Activated CD8-positive, alpha-beta T cell treated with anti-CD3 and anti-CD28 coated beads for 36 hours (primary cell): ENCODE measurements at regions of chr10 and their contacts with region 1.

Region 1: DNA sequence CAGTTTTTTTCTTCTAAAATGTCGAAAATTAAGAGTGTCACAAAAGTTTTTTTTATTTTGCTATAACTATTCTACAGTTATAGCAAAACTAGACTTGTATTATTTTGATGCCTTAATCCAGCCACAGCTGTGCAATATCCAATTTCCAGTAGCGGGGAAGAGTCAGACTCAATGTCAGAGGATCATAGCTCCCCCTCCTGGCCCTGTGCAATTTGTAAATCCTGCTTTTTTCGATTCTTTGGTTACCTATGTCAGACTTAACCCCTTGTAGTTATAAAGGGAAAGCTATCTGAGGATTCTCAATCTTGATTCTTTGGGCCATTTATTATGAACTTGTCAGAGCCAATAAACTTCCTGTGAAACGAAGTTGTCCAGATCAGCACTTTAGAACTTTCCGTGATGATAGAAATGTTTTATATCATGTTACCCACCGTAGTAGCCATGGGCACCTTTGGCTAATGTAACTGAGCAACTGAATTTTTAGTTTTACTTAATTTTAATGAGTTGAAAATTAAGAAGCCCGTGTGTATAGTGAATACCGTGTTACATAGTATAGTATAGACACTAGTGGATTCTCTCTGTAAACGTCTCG is 87.7 kb upstream of the PRKCQ start:
- DNase-seq: peak; percentile 74
- ATAC-seq: peak; percentile 38
- H3K4me3 Mint-ChIP-seq: no peak overlapping the region
- H3K27ac Mint-ChIP-seq: no peak overlapping the region
- H3K4me1 Mint-ChIP-seq: peaks cover 24% of the 10 kb centered on the region
- H3K27me3 Mint-ChIP-seq: no peaks in the 10 kb centered on the region
- CTCF ChIP-seq: peak; percentile 88

Region 2: DNA sequence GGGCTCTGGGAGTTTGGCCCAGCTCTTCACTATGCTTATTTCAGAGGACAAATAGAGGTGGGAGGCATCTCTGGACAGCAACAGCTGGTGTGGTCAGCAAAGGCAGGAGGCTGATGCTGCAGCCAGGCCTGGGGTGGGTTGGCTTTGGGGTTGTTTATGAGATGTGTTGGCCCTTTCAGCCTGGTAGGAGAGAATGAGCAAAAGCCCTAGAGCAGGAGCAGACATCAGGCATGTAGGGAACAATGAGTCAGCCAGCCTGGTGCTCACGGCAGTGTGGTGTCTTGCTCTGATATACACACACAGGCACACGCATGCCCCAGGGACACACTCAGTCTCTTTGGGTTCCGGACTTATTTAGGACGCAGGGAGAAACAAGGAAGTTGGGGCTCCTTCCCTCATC is 244.8 kb before region 1 on chr10:
- CTCF ChIA-PET with region 1: interaction called, 28 read pairs
- POLR2A ChIA-PET with region 1: no interaction called
- intact Hi-C with region 1: loop called (anchors 5 kb)
- DNase-seq: peak; percentile 82
- ATAC-seq: peak; percentile 87
- H3K4me3 Mint-ChIP-seq: no peak overlapping the region
- H3K27ac Mint-ChIP-seq: peak overlapping the region; percentile 77
- H3K4me1 Mint-ChIP-seq: peaks cover 33% of the 10 kb centered on the region
- H3K27me3 Mint-ChIP-seq: no peaks in the 10 kb centered on the region
- CTCF ChIP-seq: no peak

Region 3: DNA sequence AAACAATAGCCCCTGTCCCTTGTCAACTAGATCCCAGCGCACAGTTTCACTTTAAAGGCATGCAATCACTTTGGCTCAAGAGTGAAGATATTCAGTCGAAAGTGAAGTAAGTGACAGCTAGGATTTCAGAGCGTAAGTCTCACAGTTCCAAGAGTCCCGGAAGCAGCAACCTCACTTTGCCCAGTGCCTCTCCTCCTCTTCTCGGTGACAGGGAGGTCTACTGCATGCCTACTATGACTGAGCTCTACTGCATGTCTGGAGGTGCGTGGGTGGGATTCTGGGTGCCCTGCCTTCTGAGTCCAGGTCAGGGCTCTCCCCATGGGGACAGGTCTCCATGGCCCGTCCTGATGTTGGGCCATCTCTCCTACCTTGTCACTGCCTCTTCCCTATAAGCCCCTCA is 104.7 kb before region 1 on chr10:
- CTCF ChIA-PET with region 1: interaction called, 13 read pairs
- POLR2A ChIA-PET with region 1: no interaction called
- intact Hi-C with region 1: no loop called
- DNase-seq: peak; percentile 90
- ATAC-seq: peak; percentile 89
- H3K4me3 Mint-ChIP-seq: peak overlapping the region; percentile 71
- H3K27ac Mint-ChIP-seq: peak overlapping the region; percentile 88
- H3K4me1 Mint-ChIP-seq: peaks cover 88% of the 10 kb centered on the region
- H3K27me3 Mint-ChIP-seq: no peaks in the 10 kb centered on the region
- CTCF ChIP-seq: no peak

Region 4: GRCh38 chr10:6603142-6604125 is 64.3 kb before region 1 on chr10:
- CTCF ChIA-PET with region 1: interaction called, 12 read pairs
- POLR2A ChIA-PET with region 1: no interaction called
- intact Hi-C with region 1: no loop called
- DNase-seq: no peak
- ATAC-seq: no peak
- H3K4me3 Mint-ChIP-seq: no peak overlapping the region
- H3K27ac Mint-ChIP-seq: peak overlapping the region; percentile 43
- H3K4me1 Mint-ChIP-seq: peaks cover 74% of the 10 kb centered on the region
- H3K27me3 Mint-ChIP-seq: no peaks in the 10 kb centered on the region
- CTCF ChIP-seq: no peak

Region 5: GRCh38 chr10:6647811-6648526 is 19.8 kb before region 1 on chr10:
- CTCF ChIA-PET with region 1: interaction called, 19 read pairs
- POLR2A ChIA-PET with region 1: no interaction called
- intact Hi-C with region 1: no loop called
- DNase-seq: peak; percentile 85
- ATAC-seq: peak; percentile 91
- H3K4me3 Mint-ChIP-seq: peak overlapping the region; percentile 7
- H3K27ac Mint-ChIP-seq: no peak overlapping the region
- H3K4me1 Mint-ChIP-seq: peaks cover 50% of the 10 kb centered on the region
- H3K27me3 Mint-ChIP-seq: no peaks in the 10 kb centered on the region
- CTCF ChIP-seq: peak; percentile 98

Region 6: DNA sequence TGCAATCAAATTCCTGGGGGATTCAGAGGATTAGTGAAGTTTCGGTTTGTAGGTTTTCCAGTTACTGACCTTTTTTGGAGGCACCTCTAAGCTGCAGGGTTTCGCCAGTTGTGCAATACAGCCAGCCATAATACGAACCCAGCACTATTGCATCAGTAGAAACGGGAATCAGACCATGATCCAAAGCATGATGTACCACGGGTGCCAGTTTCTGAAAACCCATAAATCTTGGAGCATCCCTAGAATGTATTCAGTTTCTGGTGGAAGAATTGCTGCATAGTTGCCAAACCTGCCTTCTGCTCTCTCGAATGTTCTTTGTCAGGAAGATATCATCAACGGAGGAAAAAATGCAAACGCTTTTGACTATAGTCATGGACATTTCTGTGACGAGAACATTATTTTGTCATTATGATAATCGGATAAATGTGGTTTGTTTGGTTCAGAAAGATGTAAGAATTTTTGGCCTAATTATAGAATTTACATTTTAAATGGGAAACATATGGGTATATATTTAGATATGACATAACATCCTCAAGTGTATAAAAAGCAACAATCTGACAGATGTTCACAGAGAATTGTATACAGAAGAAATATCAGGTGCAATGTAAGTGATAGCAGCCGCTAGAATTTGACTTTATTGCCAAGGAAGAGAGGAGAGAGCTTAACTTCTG is 98.5 kb after region 1 on chr10:
- CTCF ChIA-PET with region 1: no interaction called
- POLR2A ChIA-PET with region 1: no interaction called
- intact Hi-C with region 1: no loop called
- DNase-seq: no peak
- ATAC-seq: no peak
- H3K4me3 Mint-ChIP-seq: no peak overlapping the region
- H3K27ac Mint-ChIP-seq: no peak overlapping the region
- H3K4me1 Mint-ChIP-seq: no peaks in the 10 kb centered on the region
- H3K27me3 Mint-ChIP-seq: peaks cover 22% of the 10 kb centered on the region
- CTCF ChIP-seq: no peak

Region 7: DNA sequence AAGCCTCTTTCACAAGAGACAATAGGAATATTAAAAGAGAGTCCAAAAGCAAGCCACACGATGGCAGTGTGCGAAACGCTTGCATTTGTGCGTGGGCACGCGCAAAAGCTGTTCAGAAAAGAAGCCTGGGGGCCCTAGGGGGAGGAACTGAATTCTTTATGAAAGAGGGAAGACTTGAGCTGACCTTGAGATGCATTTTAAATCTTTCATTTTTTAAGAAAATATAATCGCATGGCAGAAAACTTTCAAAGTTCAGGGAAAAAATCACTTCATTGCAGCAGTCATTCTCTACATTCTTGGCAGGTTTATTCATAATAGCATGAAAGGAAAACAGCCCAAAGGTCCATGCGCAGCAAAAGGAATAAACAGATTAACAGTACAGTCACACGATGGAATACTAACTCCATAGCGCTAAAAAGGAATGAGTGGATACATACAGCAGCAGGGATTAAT is 118.8 kb after region 1 on chr10:
- CTCF ChIA-PET with region 1: no interaction called
- POLR2A ChIA-PET with region 1: no interaction called
- intact Hi-C with region 1: no loop called
- DNase-seq: no peak
- ATAC-seq: no peak
- H3K4me3 Mint-ChIP-seq: no peak overlapping the region
- H3K27ac Mint-ChIP-seq: no peak overlapping the region
- H3K4me1 Mint-ChIP-seq: no peaks in the 10 kb centered on the region
- H3K27me3 Mint-ChIP-seq: peaks cover 14% of the 10 kb centered on the region
- CTCF ChIP-seq: no peak